ENCODE measurements at regions of chr15 and their contacts with region 1.

Region 1: GRCh38 chr15:100341662-100342560 is at the start of gene ADAMTS17:
- DNase-seq: peak; percentile 84 to 93
- H3K4me3 ChIP-seq: peak within 1 kb of the TSS; percentile 66; the same call in 1 of the 2 replicates
- H3K27ac ChIP-seq: no peak within 1 kb of the TSS
- H3K4me1 ChIP-seq: 0 out of 2 replicates have a peak, but pooled peaks cover 5% of the 10 kb centered on the region
- H3K27me3 ChIP-seq: no peaks in the 10 kb centered on the region
- CTCF ChIP-seq: peak; percentile 84
- total RNA-seq, gene ADAMTS17: 2.0 and 3.2 TPM in 2 replicates

Region 2: DNA sequence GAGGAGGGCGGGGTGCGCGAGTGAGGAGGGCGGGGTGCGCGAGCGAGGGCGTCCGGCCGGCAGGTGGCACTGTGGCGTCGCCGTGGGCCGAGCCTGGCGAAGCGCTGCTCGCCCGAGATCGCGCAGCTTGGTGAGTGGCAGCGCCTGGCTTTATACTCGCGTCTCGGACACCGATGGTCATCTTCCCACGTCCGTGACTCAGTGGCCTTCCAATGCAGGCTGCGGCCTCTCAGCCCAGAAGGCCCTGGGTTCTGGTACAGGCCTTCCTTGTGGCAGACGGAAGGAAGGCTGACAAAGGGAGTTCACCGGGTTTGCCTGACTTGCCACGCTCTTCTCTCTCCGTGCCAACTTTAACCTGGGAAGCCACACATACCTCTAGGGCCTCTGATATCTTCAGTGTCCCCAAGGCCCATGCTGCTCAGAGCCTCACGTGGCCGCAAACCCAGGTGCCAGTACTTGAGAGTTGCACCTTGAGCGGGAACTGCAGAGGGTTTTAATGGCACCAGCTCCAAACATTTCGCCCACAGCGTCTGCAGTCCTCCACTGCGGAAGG is 413.4 kb before region 1 on chr15:
- CTCF ChIA-PET with region 1: interaction called, 5 read pairs
- POLR2A ChIA-PET with region 1: no interaction called
- intact Hi-C with region 1: loop called (anchors 2 kb)
- DNase-seq: peak; percentile 47 to 83
- H3K4me3 ChIP-seq: peak overlapping the region; percentile 69
- H3K27ac ChIP-seq: peak overlapping the region; percentile 40; the same call in 1 of the 2 replicates
- H3K4me1 ChIP-seq: peaks cover 8% of the 10 kb centered on the region
- H3K27me3 ChIP-seq: peaks cover 13% of the 10 kb centered on the region; the same call in 1 of the 2 replicates
- CTCF ChIP-seq: peak; percentile 68

Region 3: GRCh38 chr15:100125401-100126191 is 216.3 kb before region 1 on chr15:
- CTCF ChIA-PET with region 1: no interaction called
- POLR2A ChIA-PET with region 1: no interaction called
- intact Hi-C with region 1: loop called (anchors 5 kb)
- DNase-seq: no peak
- H3K4me3 ChIP-seq: no peak overlapping the region
- H3K27ac ChIP-seq: no peak overlapping the region
- H3K4me1 ChIP-seq: no peaks in the 10 kb centered on the region
- H3K27me3 ChIP-seq: no peaks in the 10 kb centered on the region
- CTCF ChIP-seq: no peak

Region 4: GRCh38 chr15:100247228-100248225 is 94.4 kb before region 1 on chr15:
- CTCF ChIA-PET with region 1: no interaction called
- POLR2A ChIA-PET with region 1: no interaction called
- intact Hi-C with region 1: loop called (anchors 5 kb)
- DNase-seq: peak; percentile 54 to 81
- H3K4me3 ChIP-seq: no peak overlapping the region
- H3K27ac ChIP-seq: no peak overlapping the region
- H3K4me1 ChIP-seq: no peaks in the 10 kb centered on the region; the same call in 1 of the 2 replicates
- H3K27me3 ChIP-seq: no peaks in the 10 kb centered on the region
- CTCF ChIP-seq: no peak

Region 5: GRCh38 chr15:100753503-100753902 is 411.6 kb after region 1 on chr15:
- CTCF ChIA-PET with region 1: no interaction called
- POLR2A ChIA-PET with region 1: no interaction called
- intact Hi-C with region 1: no loop called
- DNase-seq: no peak
- H3K4me3 ChIP-seq: no peak overlapping the region
- H3K27ac ChIP-seq: no peak overlapping the region
- H3K4me1 ChIP-seq: peaks cover 20% of the 10 kb centered on the region
- H3K27me3 ChIP-seq: no peaks in the 10 kb centered on the region
- CTCF ChIP-seq: no peak

Region 6: DNA sequence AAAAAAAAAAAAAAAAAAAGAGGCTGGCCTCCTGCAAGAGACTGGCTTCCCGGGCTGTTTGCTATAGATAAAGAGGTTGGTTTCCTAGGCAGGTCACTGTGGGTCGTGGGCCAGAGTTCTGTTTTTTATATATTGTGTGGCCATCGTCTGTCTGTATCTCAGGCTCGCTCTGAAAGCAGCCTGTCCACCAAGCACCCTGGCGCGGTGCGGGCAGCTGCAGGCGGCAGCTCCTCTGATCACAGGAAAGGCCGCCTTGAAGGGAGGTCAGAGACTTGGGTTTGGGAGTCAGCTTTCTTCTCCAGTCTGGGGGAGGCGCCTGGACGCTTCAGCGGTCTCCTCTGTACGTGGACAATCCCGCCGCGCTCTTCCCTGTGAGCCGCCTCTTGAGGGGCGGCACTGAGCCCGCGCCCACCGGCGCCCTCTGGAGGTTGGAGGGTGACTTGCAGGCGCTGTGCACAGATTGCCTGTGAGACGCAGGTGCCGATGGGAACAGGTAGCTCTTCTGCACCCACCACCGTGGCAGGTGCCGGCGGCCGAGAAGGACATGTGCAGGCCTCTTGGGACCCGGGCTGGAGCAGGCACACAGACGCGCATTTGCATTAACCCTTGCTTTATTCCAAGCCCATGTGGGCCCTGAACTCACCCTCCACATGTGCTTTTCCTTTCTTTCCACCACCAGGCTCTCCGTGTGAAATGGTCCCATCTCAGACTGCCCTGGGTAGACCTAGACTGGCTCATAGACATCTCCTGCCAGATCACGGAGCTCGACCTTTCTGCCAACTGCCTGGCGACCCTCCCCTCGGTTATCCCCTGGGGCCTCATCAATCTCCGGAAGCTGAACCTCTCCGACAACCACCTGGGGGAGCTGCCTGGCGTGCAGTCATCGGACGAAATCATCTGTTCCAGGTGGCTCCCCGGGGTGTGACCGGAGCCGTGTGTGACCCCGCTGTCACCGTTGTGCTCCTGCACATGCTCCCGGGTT is 666.5 kb after region 1 on chr15:
- CTCF ChIA-PET with region 1: no interaction called
- POLR2A ChIA-PET with region 1: no interaction called
- intact Hi-C with region 1: loop called (anchors 1 kb)
- DNase-seq: peak; percentile 72 to 88
- H3K4me3 ChIP-seq: peak overlapping the region; percentile 67
- H3K27ac ChIP-seq: no peak overlapping the region
- H3K4me1 ChIP-seq: 0 out of 2 replicates have a peak, but pooled peaks cover 4% of the 10 kb centered on the region
- H3K27me3 ChIP-seq: no peaks in the 10 kb centered on the region
- CTCF ChIP-seq: peak; percentile 97